Activated CD4-positive, alpha-beta memory T cell treated with anti-CD3 and anti-CD28 coated beads, Interleukin-2, amount 10 ng/mL, durations not matched to agents 7 days and 5 days (primary cell): ENCODE measurements at regions of chr3 and their contacts with region 1.

Region 1: GRCh38 chr3:47522082-47522987 is 8.8 kb upstream of the ELP6 start:
- DNase-seq: peak; percentile 84
- H3K4me3 Mint-ChIP-seq: no peak overlapping the region
- H3K27ac Mint-ChIP-seq: no peak overlapping the region
- H3K4me1 Mint-ChIP-seq: peaks cover 11% of the 10 kb centered on the region
- H3K27me3 Mint-ChIP-seq: peaks cover 7% of the 10 kb centered on the region

Region 2: GRCh38 chr3:47455806-47456452 is 66.4 kb before region 1 on chr3:
- CTCF ChIA-PET with region 1: no interaction called
- POLR2A ChIA-PET with region 1: no interaction called
- DNase-seq: no peak
- H3K4me3 Mint-ChIP-seq: no peak overlapping the region
- H3K27ac Mint-ChIP-seq: no peak overlapping the region
- H3K4me1 Mint-ChIP-seq: no peaks in the 10 kb centered on the region
- H3K27me3 Mint-ChIP-seq: no peaks in the 10 kb centered on the region

Region 3: DNA sequence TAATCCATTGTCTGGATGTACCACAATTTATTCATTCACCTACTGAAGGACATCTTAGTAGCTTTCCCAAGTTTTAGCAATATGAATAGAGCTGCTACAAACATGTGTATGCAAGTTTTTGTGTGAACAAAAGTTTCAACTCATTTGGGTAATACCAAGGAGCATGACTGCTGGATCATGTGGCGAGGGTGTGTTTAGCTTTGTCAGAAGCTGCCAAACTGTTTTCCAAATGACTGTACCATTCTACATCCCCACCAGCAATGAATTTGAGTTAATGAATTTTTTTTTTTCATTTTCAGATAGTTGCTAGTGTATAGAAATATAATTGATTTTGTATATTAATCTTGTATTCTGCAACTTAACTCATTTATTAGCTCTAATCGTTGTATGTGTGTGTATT is 11.1 kb after region 1 on chr3:
- CTCF ChIA-PET with region 1: interaction called, 25 read pairs
- POLR2A ChIA-PET with region 1: no interaction called
- DNase-seq: no peak
- H3K4me3 Mint-ChIP-seq: no peak overlapping the region
- H3K27ac Mint-ChIP-seq: no peak overlapping the region
- H3K4me1 Mint-ChIP-seq: no peaks in the 10 kb centered on the region
- H3K27me3 Mint-ChIP-seq: peaks cover 5% of the 10 kb centered on the region

Region 4: GRCh38 chr3:47781685-47782445 is 259.5 kb after region 1 on chr3 and contains the start of gene SMARCC1:
- CTCF ChIA-PET with region 1: interaction called, 93 read pairs
- POLR2A ChIA-PET with region 1: interaction called, 7 read pairs
- DNase-seq: peak; percentile 99
- H3K4me3 Mint-ChIP-seq: peak within 1 kb of the TSS; percentile 93
- H3K27ac Mint-ChIP-seq: peak within 1 kb of the TSS; percentile 96
- H3K4me1 Mint-ChIP-seq: peaks cover 22% of the 10 kb centered on the region
- H3K27me3 Mint-ChIP-seq: no peaks in the 10 kb centered on the region
- total RNA-seq, gene SMARCC1: 83.0 to 83.7 TPM

Region 5: GRCh38 chr3:47791193-47791855 is 269.0 kb after region 1 on chr3:
- CTCF ChIA-PET with region 1: interaction called, 93 read pairs
- POLR2A ChIA-PET with region 1: interaction called, 11 read pairs
- DNase-seq: no peak
- H3K4me3 Mint-ChIP-seq: no peak overlapping the region
- H3K27ac Mint-ChIP-seq: no peak overlapping the region
- H3K4me1 Mint-ChIP-seq: peaks cover 4% of the 10 kb centered on the region
- H3K27me3 Mint-ChIP-seq: no peaks in the 10 kb centered on the region

Region 6: DNA sequence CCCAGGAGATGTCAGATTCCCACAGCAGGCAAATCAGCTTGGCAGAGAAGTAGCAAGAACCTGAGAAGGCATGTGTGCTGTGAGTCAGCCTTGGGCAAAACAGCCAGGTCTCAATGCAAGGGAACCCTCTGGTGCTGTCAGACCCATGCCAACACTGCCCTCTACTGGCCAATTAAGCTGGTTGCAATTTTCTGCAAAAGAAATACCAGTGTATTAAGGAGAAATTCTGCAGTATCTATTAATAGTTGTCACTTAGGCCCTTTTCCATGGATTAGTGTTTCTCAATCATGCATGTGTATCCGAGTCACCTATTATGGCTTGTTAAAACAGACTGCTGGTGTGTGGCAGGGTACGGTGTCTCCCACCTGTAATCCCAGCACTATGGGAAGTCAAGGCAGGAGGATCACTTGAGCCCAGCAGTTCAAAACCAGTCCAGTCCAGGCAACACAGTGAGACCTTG is 467.7 kb after region 1 on chr3:
- CTCF ChIA-PET with region 1: interaction called, 11 read pairs
- POLR2A ChIA-PET with region 1: no interaction called
- DNase-seq: peak; percentile 75
- H3K4me3 Mint-ChIP-seq: no peak overlapping the region
- H3K27ac Mint-ChIP-seq: no peak overlapping the region
- H3K4me1 Mint-ChIP-seq: peaks cover 10% of the 10 kb centered on the region
- H3K27me3 Mint-ChIP-seq: no peaks in the 10 kb centered on the region